CD8-positive, alpha-beta memory T cell (primary cell): ENCODE measurements at regions of chr18 and their contacts with region 1.

Region 1: GRCh38 chr18:3062798-3063680 is 50.1 kb upstream of the LPIN2 start:
- DNase-seq: peak; percentile 40 to 82 (median 41)
- H3K4me3 ChIP-seq: peak overlapping the region; percentile 62
- H3K4me3 Mint-ChIP-seq: peak overlapping the region; percentile 23 to 92 (median 70)
- H3K27ac ChIP-seq: peak overlapping the region; percentile 83
- H3K27ac Mint-ChIP-seq: peak overlapping the region; percentile 70 to 98 (median 97)
- H3K4me1 ChIP-seq: peaks cover 64% of the 10 kb centered on the region
- H3K4me1 Mint-ChIP-seq: peaks cover 74 to 83% (median 80%) of the 10 kb centered on the region in 3 donors
- H3K27me3 ChIP-seq: no peaks in the 10 kb centered on the region
- H3K27me3 Mint-ChIP-seq: no peaks in the 10 kb centered on the region

Region 2: DNA sequence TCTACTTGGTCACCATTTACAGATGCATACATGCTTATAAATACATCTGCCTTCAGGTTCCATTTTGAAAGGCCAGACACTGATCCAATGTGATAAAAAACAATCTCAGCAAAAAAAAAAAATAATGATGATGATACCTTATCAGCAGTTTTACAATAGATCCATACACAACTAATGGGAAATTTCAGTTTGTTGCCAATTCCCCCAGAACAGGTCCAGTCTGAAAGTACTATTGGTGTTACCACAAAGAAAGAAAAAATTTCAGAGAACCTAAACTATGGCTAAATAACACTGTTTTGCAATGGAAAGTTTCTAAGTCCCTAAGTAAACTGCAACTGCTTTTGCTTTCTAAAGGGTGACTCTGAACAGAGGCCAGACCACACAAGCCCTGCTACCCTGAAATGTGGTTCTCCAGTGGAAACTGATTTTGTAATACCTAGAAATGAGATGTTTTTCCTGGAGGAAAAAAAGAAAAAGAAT is 104.2 kb before region 1 on chr18:
- CTCF ChIA-PET with region 1: interaction called, 12 read pairs
- POLR2A ChIA-PET with region 1: interaction called, 7 read pairs
- DNase-seq: peak in 3 of 5 donors; percentile 18 to 63 (median 23)
- H3K4me3 ChIP-seq: peak overlapping the region; percentile 12
- H3K4me3 Mint-ChIP-seq: peak overlapping the region; percentile 59 to 91 (median 80)
- H3K27ac ChIP-seq: peak overlapping the region; percentile 12
- H3K27ac Mint-ChIP-seq: peak overlapping the region; percentile 94 to 99 (median 96)
- H3K4me1 ChIP-seq: peaks cover 93% of the 10 kb centered on the region
- H3K4me1 Mint-ChIP-seq: peaks cover 88 to 95% (median 95%) of the 10 kb centered on the region in 3 donors
- H3K27me3 ChIP-seq: no peaks in the 10 kb centered on the region
- H3K27me3 Mint-ChIP-seq: no peaks in the 10 kb centered on the region

Region 3: DNA sequence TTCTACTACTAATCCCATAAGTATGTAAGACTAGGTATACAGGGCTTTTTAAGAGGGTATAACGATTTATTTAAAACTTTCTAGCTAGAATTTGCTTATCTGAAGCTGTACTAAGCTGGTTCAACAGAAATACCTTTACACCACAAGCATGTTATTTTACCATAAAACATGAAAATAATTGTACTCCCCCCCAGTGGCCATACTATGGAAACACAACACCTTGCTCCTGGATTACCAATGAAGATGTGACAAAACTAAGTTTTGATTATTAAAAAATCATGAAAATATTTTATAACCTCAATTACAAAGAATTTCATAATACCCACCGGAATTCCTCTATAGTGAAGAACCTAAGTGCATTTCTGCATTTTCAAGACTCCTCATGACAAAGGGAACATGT is 77.4 kb before region 1 on chr18:
- CTCF ChIA-PET with region 1: interaction called, 45 read pairs
- POLR2A ChIA-PET with region 1: interaction called, 4 read pairs
- DNase-seq: peak in 1 of 5 donors; percentile 70
- H3K4me3 ChIP-seq: no peak overlapping the region
- H3K4me3 Mint-ChIP-seq: peak overlapping the region in 1 of 7 donors; percentile 38
- H3K27ac ChIP-seq: no peak overlapping the region
- H3K27ac Mint-ChIP-seq: peak overlapping the region in 4 of 8 donors; percentile 17 to 78 (median 36)
- H3K4me1 ChIP-seq: peaks cover 40% of the 10 kb centered on the region
- H3K4me1 Mint-ChIP-seq: peaks cover 60 to 84% (median 75%) of the 10 kb centered on the region in 3 donors
- H3K27me3 ChIP-seq: no peaks in the 10 kb centered on the region
- H3K27me3 Mint-ChIP-seq: no peaks in the 10 kb centered on the region

Region 4: GRCh38 chr18:3012964-3013804 is 49.9 kb before region 1 on chr18 and contains the start of gene LPIN2:
- CTCF ChIA-PET with region 1: interaction called, 71 read pairs
- POLR2A ChIA-PET with region 1: interaction called, 15 read pairs
- DNase-seq: peak; percentile 91 to 99 (median 98)
- H3K4me3 ChIP-seq: peak within 1 kb of the TSS; percentile 55
- H3K4me3 Mint-ChIP-seq: peak within 1 kb of the TSS; percentile 93 to 97 (median 97)
- H3K27ac ChIP-seq: peak within 1 kb of the TSS; percentile 66
- H3K27ac Mint-ChIP-seq: peak within 1 kb of the TSS; percentile 94 to 98 (median 96)
- H3K4me1 ChIP-seq: peaks cover 71% of the 10 kb centered on the region
- H3K4me1 Mint-ChIP-seq: peaks cover 58 to 72% (median 67%) of the 10 kb centered on the region in 3 donors
- H3K27me3 ChIP-seq: no peaks in the 10 kb centered on the region
- H3K27me3 Mint-ChIP-seq: peaks cover 2 to 3% of the 10 kb centered on the region in 2 donors
- total RNA-seq, gene LPIN2: 82.9 to 83.2 TPM

Region 5: DNA sequence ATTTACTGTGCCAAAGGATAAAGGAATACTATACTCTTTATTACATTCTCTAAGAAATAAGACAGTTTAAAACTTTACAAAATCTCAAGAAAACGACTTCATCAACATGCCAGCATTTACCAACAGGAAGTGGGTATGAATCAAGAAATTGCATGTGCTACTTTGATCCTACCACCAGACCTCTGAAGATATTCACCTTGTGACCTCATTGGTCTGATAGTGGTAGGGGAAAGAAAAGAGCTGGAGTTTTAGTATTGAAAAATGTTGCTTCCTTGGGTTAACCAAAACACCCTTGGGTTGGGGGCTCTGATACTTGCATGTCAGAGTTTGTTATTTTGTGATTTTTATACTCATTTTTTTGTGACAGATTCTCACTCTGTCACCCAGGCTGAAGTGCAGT is 34.0 kb after region 1 on chr18:
- CTCF ChIA-PET with region 1: interaction called, 10 read pairs
- POLR2A ChIA-PET with region 1: no interaction called
- DNase-seq: peak in 2 of 5 donors; percentile 64 to 78
- H3K4me3 ChIP-seq: no peak overlapping the region
- H3K4me3 Mint-ChIP-seq: peak overlapping the region in 2 of 7 donors; percentile 13 to 49
- H3K27ac ChIP-seq: no peak overlapping the region
- H3K27ac Mint-ChIP-seq: peak overlapping the region in 5 of 8 donors; percentile 1 to 87 (median 60)
- H3K4me1 ChIP-seq: peaks cover 21% of the 10 kb centered on the region
- H3K4me1 Mint-ChIP-seq: peaks cover 18 to 21% (median 19%) of the 10 kb centered on the region in 3 donors
- H3K27me3 ChIP-seq: no peaks in the 10 kb centered on the region
- H3K27me3 Mint-ChIP-seq: no peaks in the 10 kb centered on the region

Region 6: DNA sequence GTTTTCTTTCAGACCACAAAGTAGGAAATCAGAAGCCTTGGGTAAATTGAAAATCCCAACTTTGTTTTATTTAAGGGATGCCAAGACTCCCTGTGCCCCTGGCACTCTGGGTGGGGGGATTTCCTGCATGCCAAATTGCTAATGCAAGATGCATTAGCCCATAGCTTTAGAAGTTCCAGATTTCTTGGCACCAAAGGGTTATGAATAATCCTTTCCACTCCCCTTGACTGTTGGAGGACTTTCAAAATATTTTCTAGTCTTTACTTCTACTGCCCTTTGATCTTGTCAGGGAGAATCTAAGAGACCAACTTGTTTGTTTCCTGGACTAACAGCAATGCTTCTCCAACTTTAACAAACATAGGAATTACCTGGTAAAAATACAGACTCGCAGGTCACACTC is 305.2 kb after region 1 on chr18:
- CTCF ChIA-PET with region 1: no interaction called
- POLR2A ChIA-PET with region 1: no interaction called
- DNase-seq: no peak
- H3K4me3 ChIP-seq: no peak overlapping the region
- H3K4me3 Mint-ChIP-seq: no peak overlapping the region
- H3K27ac ChIP-seq: no peak overlapping the region
- H3K27ac Mint-ChIP-seq: no peak overlapping the region
- H3K4me1 ChIP-seq: no peaks in the 10 kb centered on the region
- H3K4me1 Mint-ChIP-seq: no peaks in the 10 kb centered on the region
- H3K27me3 ChIP-seq: no peaks in the 10 kb centered on the region
- H3K27me3 Mint-ChIP-seq: peaks cover 0 to 9% of the 10 kb centered on the region in 2 donors